ENCODE measurements at regions of chr12 and their contacts with region 1.

Region 1: DNA sequence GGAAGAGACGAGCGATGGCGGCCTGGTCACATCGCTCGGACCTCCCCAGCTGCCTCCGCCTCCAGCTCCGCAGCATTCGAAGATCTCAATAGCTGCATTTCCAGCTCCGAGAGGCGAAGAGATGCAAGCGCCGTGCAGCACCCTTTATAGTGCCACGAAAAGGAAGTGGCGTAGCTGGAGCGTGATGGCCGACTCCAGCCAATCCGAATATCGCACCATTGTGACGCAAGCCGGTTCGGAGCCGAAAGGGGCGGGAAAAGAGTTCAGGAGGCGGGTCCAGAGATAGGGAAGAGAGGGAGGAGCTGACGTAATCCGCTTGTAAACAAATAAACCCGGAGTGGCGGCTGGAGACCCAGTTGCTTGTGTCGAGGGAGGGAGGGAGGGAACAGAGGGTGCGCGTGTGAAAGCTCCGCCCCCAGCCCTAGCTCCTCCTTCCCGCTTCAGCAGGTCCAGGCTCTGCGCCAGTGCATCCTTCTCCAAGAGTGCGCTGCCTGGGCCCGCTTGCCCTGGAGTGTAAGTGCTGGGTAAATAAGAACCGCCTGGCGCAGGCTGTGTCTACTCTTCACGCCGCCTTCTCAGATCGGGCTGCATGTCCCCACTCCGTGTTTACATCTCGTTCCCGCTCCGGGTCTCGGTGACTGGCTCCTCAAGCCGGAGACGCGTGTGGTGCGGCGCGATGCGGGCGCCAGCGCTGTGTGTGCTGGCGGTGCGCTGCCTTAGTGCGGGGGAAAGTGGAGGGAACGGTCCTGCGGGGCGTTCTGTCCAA is at the start of gene BTG1:
- DNase-seq: peak; percentile 100
- H3K4me3 Mint-ChIP-seq: peak within 1 kb of the TSS; percentile 99
- H3K27ac Mint-ChIP-seq: peak within 1 kb of the TSS; percentile 99
- H3K4me1 Mint-ChIP-seq: peaks cover 28% of the 10 kb centered on the region
- H3K27me3 Mint-ChIP-seq: no peaks in the 10 kb centered on the region
- total RNA-seq, gene BTG1: 84.2 and 90.8 TPM in 2 replicates

Region 2: DNA sequence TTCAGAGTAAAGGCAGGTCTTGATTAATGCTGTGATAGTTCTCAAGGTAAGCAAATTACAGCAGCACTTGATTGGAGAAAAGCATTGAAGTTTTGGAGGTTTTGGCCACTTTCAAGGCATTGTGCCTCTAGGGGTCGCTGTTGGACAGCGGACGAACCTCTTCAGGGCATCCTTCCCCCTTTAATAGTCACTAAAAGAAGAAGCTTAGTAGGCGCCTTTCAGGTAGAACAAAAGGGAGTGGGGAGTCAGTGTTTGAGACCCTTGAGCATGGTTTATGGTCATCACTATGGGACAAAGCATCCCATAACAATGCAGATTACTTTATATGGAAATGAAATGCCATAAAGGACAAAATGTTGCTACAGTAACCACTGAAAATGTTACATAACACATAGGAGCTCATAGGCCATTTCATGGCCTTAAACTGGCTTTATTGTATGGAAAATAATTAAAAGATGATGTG is 763.8 kb before region 1 on chr12:
- intact Hi-C with region 1: loop called (anchors 1 kb)
- DNase-seq: peak; percentile 94
- H3K4me3 Mint-ChIP-seq: peak overlapping the region; percentile 84
- H3K27ac Mint-ChIP-seq: peak overlapping the region; percentile 39
- H3K4me1 Mint-ChIP-seq: peaks cover 7% of the 10 kb centered on the region
- H3K27me3 Mint-ChIP-seq: peaks cover 12% of the 10 kb centered on the region

Region 3: GRCh38 chr12:91493308-91493707 is 652.6 kb before region 1 on chr12:
- intact Hi-C with region 1: no loop called
- DNase-seq: no peak
- H3K4me3 Mint-ChIP-seq: no peak overlapping the region
- H3K27ac Mint-ChIP-seq: no peak overlapping the region
- H3K4me1 Mint-ChIP-seq: no peaks in the 10 kb centered on the region
- H3K27me3 Mint-ChIP-seq: no peaks in the 10 kb centered on the region

Region 4: GRCh38 chr12:91991399-91992187 is 154.3 kb before region 1 on chr12:
- intact Hi-C with region 1: loop called (anchors 2 kb)
- DNase-seq: peak; percentile 68
- H3K4me3 Mint-ChIP-seq: no peak overlapping the region
- H3K27ac Mint-ChIP-seq: no peak overlapping the region
- H3K4me1 Mint-ChIP-seq: peaks cover 5% of the 10 kb centered on the region
- H3K27me3 Mint-ChIP-seq: no peaks in the 10 kb centered on the region

Region 5: GRCh38 chr12:92185052-92185451 is 39.1 kb after region 1 on chr12:
- intact Hi-C with region 1: loop called (anchors 1 kb)
- DNase-seq: peak; percentile 85
- H3K4me3 Mint-ChIP-seq: peak overlapping the region; percentile 59
- H3K27ac Mint-ChIP-seq: peak overlapping the region; percentile 77
- H3K4me1 Mint-ChIP-seq: peaks cover 51% of the 10 kb centered on the region
- H3K27me3 Mint-ChIP-seq: no peaks in the 10 kb centered on the region

Region 6: DNA sequence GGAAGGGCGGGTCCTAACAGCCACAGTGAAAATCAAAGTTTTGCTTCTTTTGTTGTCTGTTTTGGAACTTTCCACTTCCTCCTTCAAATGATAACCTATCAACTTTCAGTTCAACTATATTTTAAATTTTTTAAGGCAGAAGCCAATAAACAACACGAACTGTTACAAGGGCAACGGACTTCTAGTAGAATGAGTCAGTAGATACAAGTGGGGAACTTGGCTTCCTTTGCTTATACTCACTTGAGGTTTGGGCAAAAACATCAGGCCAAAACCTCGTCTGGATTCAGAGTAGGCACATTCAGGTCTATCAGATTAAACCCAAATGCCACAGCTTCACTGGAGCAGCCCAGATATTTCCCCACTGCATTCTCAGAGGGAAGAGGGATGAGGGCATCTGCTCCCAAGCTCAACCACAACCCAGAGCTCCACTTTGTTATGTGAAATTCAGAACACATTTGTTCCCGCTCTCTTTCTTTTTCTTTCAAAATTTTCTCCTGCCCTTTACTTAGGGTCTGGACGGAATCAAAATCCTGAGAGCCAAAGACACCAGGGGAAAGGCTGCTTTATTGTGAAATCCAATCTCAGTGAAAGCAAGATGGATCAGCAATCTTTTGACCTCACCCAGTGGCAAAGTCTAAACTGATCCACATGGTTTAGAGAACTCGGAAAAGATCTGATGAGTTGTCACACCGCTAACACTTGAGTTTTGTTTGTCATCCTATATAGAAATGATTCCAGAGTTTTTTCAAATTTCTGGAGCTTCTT is 152.2 kb after region 1 on chr12:
- intact Hi-C with region 1: loop called (anchors 5 kb)
- DNase-seq: peak; percentile 76
- H3K4me3 Mint-ChIP-seq: peak overlapping the region; percentile 23
- H3K27ac Mint-ChIP-seq: peak overlapping the region; percentile 82
- H3K4me1 Mint-ChIP-seq: peaks cover 24% of the 10 kb centered on the region
- H3K27me3 Mint-ChIP-seq: no peaks in the 10 kb centered on the region

Region 7: GRCh38 chr12:92469837-92470236 is 323.9 kb after region 1 on chr12:
- intact Hi-C with region 1: loop called (anchors 1 kb)
- DNase-seq: no peak
- H3K4me3 Mint-ChIP-seq: no peak overlapping the region
- H3K27ac Mint-ChIP-seq: peak overlapping the region; percentile 66
- H3K4me1 Mint-ChIP-seq: peaks cover 26% of the 10 kb centered on the region
- H3K27me3 Mint-ChIP-seq: no peaks in the 10 kb centered on the region

Region 8: DNA sequence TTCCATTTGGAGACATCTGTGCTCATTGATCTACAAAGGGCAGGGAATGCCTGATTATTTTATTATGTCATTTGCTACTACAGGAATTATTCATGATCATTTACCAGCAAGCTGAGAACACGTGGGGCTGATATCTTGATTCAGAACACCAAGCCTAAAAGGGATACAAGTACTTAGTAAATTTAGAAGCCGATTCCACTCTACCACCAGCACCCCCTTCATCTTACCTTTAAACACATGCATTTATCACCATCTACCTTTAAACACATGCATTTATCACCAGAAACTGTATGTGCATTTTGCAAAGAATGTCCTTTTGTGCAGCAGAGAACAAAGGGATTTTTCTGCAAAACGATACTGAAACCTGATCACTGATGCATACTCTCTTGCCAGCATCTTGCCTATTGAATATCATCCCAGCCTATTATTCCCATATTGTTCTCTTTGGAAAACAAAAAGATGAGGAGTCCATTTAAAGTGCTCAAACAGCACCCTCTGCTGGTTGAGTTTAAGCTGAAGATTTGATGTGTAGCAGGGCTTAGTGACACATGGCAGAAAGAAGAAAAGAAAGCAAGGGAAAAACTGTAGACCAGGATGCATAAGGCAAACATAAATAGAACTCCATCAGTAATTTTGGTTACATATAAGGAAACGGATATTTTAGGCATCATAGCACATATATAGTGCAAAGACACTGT is 424.3 kb after region 1 on chr12:
- intact Hi-C with region 1: loop called (anchors 1 kb)
- DNase-seq: peak; percentile 87
- H3K4me3 Mint-ChIP-seq: no peak overlapping the region
- H3K27ac Mint-ChIP-seq: no peak overlapping the region
- H3K4me1 Mint-ChIP-seq: peaks cover 21% of the 10 kb centered on the region
- H3K27me3 Mint-ChIP-seq: no peaks in the 10 kb centered on the region